ENCODE measurements at regions of chr1 and their contacts with region 1.

Region 1: DNA sequence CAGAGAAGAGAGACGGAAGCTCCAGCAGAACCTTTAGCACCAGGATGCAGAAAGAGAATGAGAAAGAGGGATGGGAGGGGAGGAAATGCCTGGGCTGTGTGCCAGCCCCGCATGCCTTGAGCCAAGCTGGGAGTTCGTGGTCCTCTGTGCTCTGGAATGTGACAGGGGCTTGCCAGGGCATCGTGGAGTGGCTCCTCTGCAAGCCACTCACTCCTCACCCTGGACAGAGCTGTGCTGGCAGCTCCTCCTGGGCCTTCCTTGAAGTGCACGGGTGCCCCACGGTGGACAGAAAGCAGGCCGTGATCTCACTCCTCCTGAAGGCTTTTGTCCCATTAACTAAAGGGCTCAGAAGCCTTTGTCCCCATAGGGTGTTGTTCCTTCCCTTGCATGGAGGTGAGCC is 34.8 kb upstream of the PRELP start:
- DNase-seq: peak; percentile 69 to 73
- ATAC-seq: peak; percentile 91 to 97 (median 93)
- H3K4me3 ChIP-seq: no peak overlapping the region
- H3K27ac ChIP-seq: peak overlapping the region in 4 of 10 donors; percentile 20 to 70 (median 45)
- H3K4me1 ChIP-seq: peaks cover 7 to 31% (median 9%) of the 10 kb centered on the region in 9 donors
- H3K27me3 ChIP-seq: no peaks in the 10 kb centered on the region
- CTCF ChIP-seq: peak; percentile 40 to 77 (median 67)

Region 2: GRCh38 chr1:203252678-203253077 is 188.1 kb before region 1 on chr1:
- intact Hi-C with region 1: no loop called
- DNase-seq: no peak
- ATAC-seq: no peak
- H3K4me3 ChIP-seq: no peak overlapping the region
- H3K27ac ChIP-seq: no peak overlapping the region
- H3K4me1 ChIP-seq: no peaks in the 10 kb centered on the region
- H3K27me3 ChIP-seq: peaks cover 0 to 56% (median 9%) of the 10 kb centered on the region in 7 donors
- CTCF ChIP-seq: no peak

Region 3: DNA sequence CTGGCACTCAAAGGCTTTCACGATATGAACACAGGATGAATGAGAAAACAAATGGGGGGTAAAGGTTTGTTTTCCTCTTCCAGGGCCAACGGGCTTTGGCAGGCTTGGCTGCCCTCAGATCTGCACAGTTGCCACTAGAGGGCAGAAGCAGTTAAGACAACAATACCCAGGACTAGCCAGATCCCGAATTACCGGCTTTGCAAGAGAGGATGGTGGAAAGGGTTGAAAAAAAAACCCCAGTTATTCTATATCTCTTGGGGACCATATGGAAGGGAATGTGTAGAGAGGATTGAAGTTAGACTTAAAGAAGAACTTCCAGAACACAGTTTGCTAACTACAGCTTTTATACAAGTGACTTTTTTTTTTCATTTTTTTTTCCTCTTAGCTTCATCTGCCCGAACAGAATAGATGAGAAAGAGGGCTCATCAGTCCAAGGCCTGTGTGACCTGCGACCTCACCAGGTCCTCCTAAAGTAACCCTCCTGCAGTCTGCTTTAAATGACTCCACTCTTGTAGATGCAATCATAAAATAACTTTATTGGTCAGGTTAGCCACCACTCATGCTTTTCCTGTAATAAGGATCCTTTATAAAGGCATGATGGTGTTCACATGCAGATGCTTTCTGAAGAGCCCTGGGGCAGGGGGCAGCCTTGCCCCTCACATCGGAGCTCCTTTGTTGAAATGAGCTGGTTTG is 100.5 kb before region 1 on chr1:
- intact Hi-C with region 1: loop called (anchors 1 to 5 kb)
- DNase-seq: peak; percentile 39 to 81
- ATAC-seq: peak; percentile 73 to 87 (median 82)
- H3K4me3 ChIP-seq: no peak overlapping the region
- H3K27ac ChIP-seq: no peak overlapping the region
- H3K4me1 ChIP-seq: peaks cover 0 to 35% (median 13%) of the 10 kb centered on the region in 9 donors
- H3K27me3 ChIP-seq: peaks cover 0 to 25% (median 0%) of the 10 kb centered on the region in 7 donors
- CTCF ChIP-seq: peak; percentile 81 to 96 (median 89)

Region 4: DNA sequence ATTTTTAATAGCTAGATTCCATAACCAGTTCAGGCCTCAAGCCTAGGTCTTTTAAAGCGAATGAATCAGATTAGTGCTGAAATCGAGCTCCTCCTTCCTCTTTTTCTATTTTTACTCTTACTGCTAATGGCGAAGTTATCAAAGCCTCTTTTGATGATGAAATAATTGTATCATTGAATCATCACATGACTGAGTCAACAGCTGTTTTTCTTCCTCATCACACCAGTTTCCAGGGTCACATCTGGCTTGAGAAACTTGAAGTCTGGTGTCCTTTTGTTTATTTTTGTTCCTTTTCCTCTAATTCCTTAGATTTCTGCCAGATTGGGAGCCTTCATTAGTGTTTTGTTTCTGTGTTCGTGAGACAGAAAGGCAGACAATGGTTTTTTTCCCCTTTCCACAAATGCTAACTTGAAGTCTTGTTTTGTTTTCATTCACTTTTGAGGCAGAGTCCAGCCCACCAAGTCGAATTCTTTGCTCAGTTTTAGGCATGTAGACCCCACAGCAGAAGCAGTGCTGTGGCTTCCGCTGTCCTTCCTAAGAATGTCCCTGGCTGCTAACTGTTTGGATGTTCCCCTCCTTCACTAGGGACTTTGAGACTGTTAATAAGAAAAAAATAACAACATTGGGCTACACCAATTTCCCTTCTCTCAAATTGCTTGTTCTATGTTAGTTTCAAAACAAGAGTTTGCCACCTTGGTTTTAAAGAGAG is 38.0 kb before region 1 on chr1:
- intact Hi-C with region 1: loop called in 3 of 10 experiments (anchors 5 kb)
- DNase-seq: no peak
- ATAC-seq: peak in 7 of 8 donors; percentile 64 to 79 (median 74)
- H3K4me3 ChIP-seq: no peak overlapping the region
- H3K27ac ChIP-seq: peak overlapping the region; percentile 32 to 81 (median 68)
- H3K4me1 ChIP-seq: peaks cover 5 to 49% (median 32%) of the 10 kb centered on the region in 9 donors
- H3K27me3 ChIP-seq: peaks cover 0 to 5% (median 0%) of the 10 kb centered on the region in 7 donors
- CTCF ChIP-seq: no peak

Region 5: GRCh38 chr1:203475012-203475981 is 34.5 kb after region 1 on chr1 and contains the start of gene PRELP:
- intact Hi-C with region 1: loop called in 2 of 10 experiments (anchors 5 kb)
- DNase-seq: peak; percentile 36 to 43
- ATAC-seq: peak; percentile 50 to 73 (median 67)
- H3K4me3 ChIP-seq: peak within 1 kb of the TSS in 9 of 10 donors; percentile 26 to 60 (median 47)
- H3K27ac ChIP-seq: peak within 1 kb of the TSS; percentile 44 to 83 (median 76)
- H3K4me1 ChIP-seq: peaks cover 0 to 52% (median 6%) of the 10 kb centered on the region in 9 donors
- H3K27me3 ChIP-seq: peaks cover 0 to 15% (median 0%) of the 10 kb centered on the region in 7 donors
- CTCF ChIP-seq: no peak
- total RNA-seq, gene PRELP: 3.3 to 37.1 (median 14.1) TPM

Region 6: DNA sequence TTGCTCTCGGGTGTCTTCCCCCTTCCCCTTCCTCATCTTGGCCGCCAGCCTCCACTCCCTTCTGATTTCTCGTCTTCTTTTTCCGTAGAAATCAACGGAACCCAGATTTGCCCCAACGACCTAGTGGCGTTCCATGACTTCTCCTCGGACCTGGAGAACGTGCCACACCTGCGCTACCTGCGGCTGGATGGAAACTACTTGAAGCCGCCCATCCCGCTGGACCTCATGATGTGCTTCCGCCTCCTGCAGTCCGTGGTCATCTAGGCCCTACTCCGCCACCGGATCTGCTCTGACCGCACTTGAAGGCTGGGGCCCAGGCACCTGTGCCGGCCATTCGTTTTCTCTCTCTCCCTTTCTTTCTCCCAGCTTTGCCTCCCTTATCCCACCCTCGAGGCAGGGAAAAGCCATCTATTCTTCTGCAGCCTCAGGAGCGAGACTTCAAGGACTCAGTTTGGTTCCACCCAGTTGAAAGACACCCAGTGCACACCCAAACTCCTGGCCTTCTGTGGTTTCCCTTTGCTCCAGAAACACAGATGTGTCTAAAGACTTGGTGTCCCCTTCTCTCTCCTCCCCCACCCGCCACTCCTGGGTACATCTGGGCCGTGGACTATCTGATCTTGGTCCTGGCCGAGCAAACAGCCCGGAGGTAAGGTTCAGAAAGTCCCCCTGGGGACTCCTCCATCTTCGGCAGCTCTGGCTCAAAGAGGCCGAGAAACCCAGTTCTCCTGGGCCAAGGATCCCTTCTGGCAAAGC is 46.0 kb after region 1 on chr1:
- intact Hi-C with region 1: loop called in 3 of 10 experiments (anchors 2 to 5 kb)
- DNase-seq: no peak
- ATAC-seq: peak in 6 of 8 donors; percentile 2 to 30 (median 12)
- H3K4me3 ChIP-seq: peak overlapping the region in 9 of 10 donors; percentile 16 to 51 (median 44)
- H3K27ac ChIP-seq: peak overlapping the region; percentile 72 to 91 (median 82)
- H3K4me1 ChIP-seq: peaks cover 0 to 34% (median 12%) of the 10 kb centered on the region in 9 donors
- H3K27me3 ChIP-seq: no peaks in the 10 kb centered on the region
- CTCF ChIP-seq: no peak